GM12878 (cell line): ENCODE measurements at regions of chr10 and their contacts with region 1.

Region 1: GRCh38 chr10:84264611-84265141 is 19.8 kb downstream of the RGR start:
- DNase-seq: no peak
- ATAC-seq: peak; percentile 94
- H3K4me3 ChIP-seq: no peak overlapping the region
- H3K27ac ChIP-seq: no peak overlapping the region
- H3K4me1 ChIP-seq: no peaks in the 10 kb centered on the region
- H3K27me3 ChIP-seq: no peaks in the 10 kb centered on the region; a peak in 2 of 4 replicates
- CTCF ChIP-seq: peak; percentile 94 to 98 (median 97)
- EP300 ChIP-seq: no peak
- POLR2A ChIP-seq: no peak
- RAD21 ChIP-seq: peak; percentile 87

Region 2: GRCh38 chr10:83801983-83802382 is 462.7 kb before region 1 on chr10:
- CTCF ChIA-PET with region 1: no interaction called
- POLR2A ChIA-PET with region 1: no interaction called
- RAD21 ChIA-PET with region 1: no interaction called
- SMC1A ChIA-PET with region 1: no interaction called
- in situ Hi-C with region 1: no loop called
- intact Hi-C with region 1: no loop called
- DNase-seq: no peak
- ATAC-seq: no peak
- H3K4me3 ChIP-seq: no peak overlapping the region
- H3K27ac ChIP-seq: no peak overlapping the region
- H3K4me1 ChIP-seq: no peaks in the 10 kb centered on the region
- H3K27me3 ChIP-seq: no peaks in the 10 kb centered on the region
- CTCF ChIP-seq: peak; percentile 10 to 28 (median 26); a peak in 2 of 6 replicates
- EP300 ChIP-seq: no peak
- POLR2A ChIP-seq: no peak
- RAD21 ChIP-seq: peak; percentile 35; the same call in 1 of the 2 replicates

Region 3: GRCh38 chr10:84328418-84329195 is 63.9 kb after region 1 on chr10 and contains the start of gene CCSER2:
- CTCF ChIA-PET with region 1: interaction called, 5 read pairs
- POLR2A ChIA-PET with region 1: no interaction called
- RAD21 ChIA-PET with region 1: interaction called, 5 read pairs
- SMC1A ChIA-PET with region 1: interaction called, 4 read pairs
- in situ Hi-C with region 1: no loop called
- intact Hi-C with region 1: loop called (anchors 2 kb)
- DNase-seq: no peak
- ATAC-seq: peak; percentile 74
- H3K4me3 ChIP-seq: peak within 1 kb of the TSS; percentile 75
- H3K27ac ChIP-seq: peak within 1 kb of the TSS; percentile 69
- H3K4me1 ChIP-seq: peaks cover 14% of the 10 kb centered on the region
- H3K27me3 ChIP-seq: no peaks in the 10 kb centered on the region; a peak in 1 of 4 replicates
- CTCF ChIP-seq: no peak
- EP300 ChIP-seq: no peak
- POLR2A ChIP-seq: peak; percentile 87
- RAD21 ChIP-seq: no peak
- polyA plus RNA-seq, gene CCSER2: 4.7 to 6.8 TPM

Region 4: DNA sequence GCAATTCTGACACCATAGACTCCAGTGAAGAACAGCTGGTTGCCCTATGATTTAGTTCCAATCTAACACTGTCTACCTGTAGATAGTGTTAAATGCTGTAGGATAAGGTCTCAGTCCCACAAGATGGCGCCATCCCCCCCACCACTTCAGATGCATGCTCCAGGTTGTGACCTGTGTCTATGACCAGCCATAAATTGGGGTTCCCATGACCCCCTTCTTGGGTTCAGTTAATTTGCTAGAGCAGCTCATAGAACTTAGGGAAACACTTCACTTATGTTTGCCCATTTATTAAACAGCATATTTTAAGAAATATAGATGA is 76.8 kb after region 1 on chr10:
- CTCF ChIA-PET with region 1: interaction called, 15 read pairs
- POLR2A ChIA-PET with region 1: no interaction called
- RAD21 ChIA-PET with region 1: interaction called, 3 read pairs
- SMC1A ChIA-PET with region 1: interaction called, 6 read pairs
- in situ Hi-C with region 1: no loop called
- intact Hi-C with region 1: no loop called
- DNase-seq: no peak
- ATAC-seq: peak; percentile 52
- H3K4me3 ChIP-seq: no peak overlapping the region
- H3K27ac ChIP-seq: no peak overlapping the region
- H3K4me1 ChIP-seq: no peaks in the 10 kb centered on the region; the same call in 1 of the 2 replicates
- H3K27me3 ChIP-seq: no peaks in the 10 kb centered on the region
- CTCF ChIP-seq: no peak; a peak in 1 of 6 replicates
- EP300 ChIP-seq: no peak
- POLR2A ChIP-seq: no peak
- RAD21 ChIP-seq: no peak

Region 5: DNA sequence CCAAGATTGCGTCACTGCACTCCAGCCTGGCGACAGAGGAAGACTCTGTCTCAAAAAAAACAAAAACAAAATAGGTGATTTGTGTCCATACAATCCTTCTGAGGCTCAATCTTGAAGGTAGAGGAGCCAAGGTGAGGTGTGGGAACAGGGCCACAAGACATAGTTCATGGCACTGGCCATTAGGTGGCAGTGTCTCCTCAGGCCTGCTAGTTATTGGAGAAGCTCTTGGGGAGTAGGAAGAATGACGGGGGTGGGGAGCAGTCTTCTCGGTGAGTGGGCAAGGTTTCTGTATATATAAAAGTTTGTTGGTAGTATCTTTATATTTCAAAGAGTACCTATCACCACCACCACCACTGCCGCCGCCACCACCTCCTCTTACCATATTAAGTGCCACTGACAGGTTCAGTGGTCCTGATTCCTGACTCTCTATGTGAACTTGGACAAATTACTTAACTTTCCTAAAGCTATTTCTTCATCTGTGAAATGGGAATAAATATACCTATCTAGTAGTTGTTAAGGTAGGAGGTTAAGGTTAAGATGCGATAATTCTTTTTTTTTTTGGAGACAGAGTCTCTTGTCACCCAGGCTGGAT is 87.7 kb after region 1 on chr10:
- CTCF ChIA-PET with region 1: interaction called, 27 read pairs
- POLR2A ChIA-PET with region 1: no interaction called
- RAD21 ChIA-PET with region 1: interaction called, 4 read pairs
- SMC1A ChIA-PET with region 1: interaction called, 7 read pairs
- in situ Hi-C with region 1: no loop called
- intact Hi-C with region 1: no loop called
- DNase-seq: no peak
- ATAC-seq: peak; percentile 99
- H3K4me3 ChIP-seq: no peak overlapping the region
- H3K27ac ChIP-seq: no peak overlapping the region
- H3K4me1 ChIP-seq: no peaks in the 10 kb centered on the region
- H3K27me3 ChIP-seq: no peaks in the 10 kb centered on the region
- CTCF ChIP-seq: peak; percentile 81 to 90 (median 87)
- EP300 ChIP-seq: no peak
- POLR2A ChIP-seq: no peak
- RAD21 ChIP-seq: peak; percentile 83

Region 6: GRCh38 chr10:84375011-84375410 is 110.3 kb after region 1 on chr10:
- CTCF ChIA-PET with region 1: interaction called, 16 read pairs
- POLR2A ChIA-PET with region 1: no interaction called
- RAD21 ChIA-PET with region 1: interaction called, 9 read pairs
- SMC1A ChIA-PET with region 1: interaction called, 5 read pairs
- in situ Hi-C with region 1: no loop called
- intact Hi-C with region 1: loop called (anchors 1 kb)
- DNase-seq: peak; percentile 34
- ATAC-seq: peak; percentile 78
- H3K4me3 ChIP-seq: no peak overlapping the region
- H3K27ac ChIP-seq: no peak overlapping the region
- H3K4me1 ChIP-seq: no peaks in the 10 kb centered on the region
- H3K27me3 ChIP-seq: no peaks in the 10 kb centered on the region
- CTCF ChIP-seq: peak; percentile 58 to 69 (median 60)
- EP300 ChIP-seq: no peak
- POLR2A ChIP-seq: no peak
- RAD21 ChIP-seq: peak; percentile 77

Region 7: GRCh38 chr10:84715911-84716310 is 451.2 kb after region 1 on chr10:
- CTCF ChIA-PET with region 1: interaction called, 4 read pairs
- POLR2A ChIA-PET with region 1: no interaction called
- RAD21 ChIA-PET with region 1: no interaction called
- SMC1A ChIA-PET with region 1: no interaction called
- in situ Hi-C with region 1: loop called (anchors 5 kb)
- intact Hi-C with region 1: loop called (anchors 10 kb)
- DNase-seq: no peak
- ATAC-seq: peak; percentile 87
- H3K4me3 ChIP-seq: no peak overlapping the region
- H3K27ac ChIP-seq: no peak overlapping the region
- H3K4me1 ChIP-seq: no peaks in the 10 kb centered on the region
- H3K27me3 ChIP-seq: no peaks in the 10 kb centered on the region; a peak in 1 of 4 replicates
- CTCF ChIP-seq: peak; percentile 59 to 81 (median 77)
- EP300 ChIP-seq: no peak
- POLR2A ChIP-seq: no peak
- RAD21 ChIP-seq: peak; percentile 39